BJ (cell line): ENCODE measurements at regions of chr22 and their contacts with region 1.

Region 1: DNA sequence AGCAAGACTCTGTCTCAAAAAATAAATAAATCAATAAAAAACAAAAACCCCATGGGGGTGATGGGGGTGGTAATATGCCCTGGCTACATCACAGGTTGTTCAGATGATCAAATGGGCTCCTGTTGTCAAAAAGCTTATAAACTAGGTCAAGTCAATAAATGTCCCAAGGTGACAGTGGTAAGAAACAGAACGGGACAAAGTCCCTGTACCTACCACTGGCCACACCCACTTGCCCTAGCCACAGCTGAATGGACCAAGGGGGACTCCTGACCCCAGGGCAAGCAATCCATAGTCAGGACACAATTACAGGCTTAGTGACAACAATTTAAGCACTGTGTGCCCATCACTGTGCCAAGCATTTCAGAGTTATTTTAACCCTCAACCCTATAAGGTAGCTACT is 6.0 kb downstream of the NAGA start:
- DNase-seq: no peak
- H3K4me3 ChIP-seq: no peak overlapping the region
- H3K27me3 ChIP-seq: no peaks in the 10 kb centered on the region
- CTCF ChIP-seq: no peak

Region 2: GRCh38 chr22:42039271-42039670 is 25.4 kb before region 1 on chr22:
- CTCF ChIA-PET with region 1: no interaction called
- POLR2A ChIA-PET with region 1: interaction called, 11 read pairs
- DNase-seq: no peak
- H3K4me3 ChIP-seq: no peak overlapping the region
- H3K27me3 ChIP-seq: no peaks in the 10 kb centered on the region
- CTCF ChIP-seq: no peak